Endothelial cell of umbilical vein (primary cell): ENCODE measurements at regions of chr2 and their contacts with region 1.

Region 1: GRCh38 chr2:237581751-237582746 is 8.5 kb downstream of the RAB17 start:
- DNase-seq: peak; percentile 79
- H3K4me3 ChIP-seq: no peak overlapping the region
- H3K27ac ChIP-seq: no peak overlapping the region
- H3K4me1 ChIP-seq: no peaks in the 10 kb centered on the region
- H3K27me3 ChIP-seq: peaks cover 2% of the 10 kb centered on the region in 2 experiments
- CTCF ChIP-seq: peak; percentile 55 to 61
- POLR2A ChIP-seq: no peak

Region 2: DNA sequence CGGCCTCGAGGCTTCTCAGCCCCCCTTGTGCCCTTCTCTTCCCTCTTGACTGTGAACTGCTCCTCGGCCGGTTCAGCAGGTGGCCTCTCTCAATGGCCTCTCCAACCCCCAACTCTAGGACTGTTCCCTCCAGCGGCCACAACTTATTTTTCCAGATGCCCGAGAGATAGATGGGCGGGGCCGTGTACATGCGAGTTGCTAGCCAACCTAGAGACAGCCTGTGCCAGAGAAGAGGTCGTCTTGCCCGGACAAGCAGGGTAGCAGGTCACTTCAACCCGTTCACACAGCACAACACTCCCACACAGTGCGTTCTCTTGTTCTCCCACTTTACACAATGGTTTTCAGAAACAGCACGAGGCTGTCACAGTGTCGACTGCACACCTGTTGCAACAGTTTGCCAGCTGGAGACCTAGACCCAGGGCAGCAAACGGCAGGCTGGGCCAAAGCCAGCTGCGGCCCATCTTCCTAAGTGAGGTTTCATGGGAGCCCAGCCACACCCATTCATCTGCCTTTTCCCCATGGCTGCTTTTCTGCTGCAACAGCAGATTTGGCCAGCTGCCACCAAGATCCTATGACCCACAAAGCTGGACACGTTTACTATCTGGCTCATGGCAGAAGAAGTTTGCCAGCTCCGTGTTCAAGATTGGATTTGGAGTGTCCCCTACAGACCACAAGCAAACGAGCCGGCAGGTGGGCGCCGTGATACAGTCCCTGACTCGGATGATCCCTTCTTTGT is 23.0 kb before region 1 on chr2:
- CTCF ChIA-PET with region 1: no interaction called
- POLR2A ChIA-PET with region 1: no interaction called
- dilution Hi-C with region 1: no loop called
- intact Hi-C with region 1: no loop called
- DNase-seq: no peak
- H3K4me3 ChIP-seq: no peak overlapping the region
- H3K27ac ChIP-seq: no peak overlapping the region
- H3K4me1 ChIP-seq: no peaks in the 10 kb centered on the region
- H3K27me3 ChIP-seq: peaks cover 4 to 7% of the 10 kb centered on the region in 2 experiments
- CTCF ChIP-seq: no peak
- POLR2A ChIP-seq: no peak

Region 3: GRCh38 chr2:237685408-237685807 is 103.4 kb after region 1 on chr2:
- CTCF ChIA-PET with region 1: interaction called, 18 read pairs
- POLR2A ChIA-PET with region 1: no interaction called
- dilution Hi-C with region 1: no loop called
- intact Hi-C with region 1: no loop called
- DNase-seq: no peak
- H3K4me3 ChIP-seq: no peak overlapping the region
- H3K27ac ChIP-seq: no peak overlapping the region
- H3K4me1 ChIP-seq: peaks cover 27% of the 10 kb centered on the region
- H3K27me3 ChIP-seq: no peaks in the 10 kb centered on the region
- CTCF ChIP-seq: peak; percentile 20 to 27
- POLR2A ChIP-seq: no peak

Region 4: DNA sequence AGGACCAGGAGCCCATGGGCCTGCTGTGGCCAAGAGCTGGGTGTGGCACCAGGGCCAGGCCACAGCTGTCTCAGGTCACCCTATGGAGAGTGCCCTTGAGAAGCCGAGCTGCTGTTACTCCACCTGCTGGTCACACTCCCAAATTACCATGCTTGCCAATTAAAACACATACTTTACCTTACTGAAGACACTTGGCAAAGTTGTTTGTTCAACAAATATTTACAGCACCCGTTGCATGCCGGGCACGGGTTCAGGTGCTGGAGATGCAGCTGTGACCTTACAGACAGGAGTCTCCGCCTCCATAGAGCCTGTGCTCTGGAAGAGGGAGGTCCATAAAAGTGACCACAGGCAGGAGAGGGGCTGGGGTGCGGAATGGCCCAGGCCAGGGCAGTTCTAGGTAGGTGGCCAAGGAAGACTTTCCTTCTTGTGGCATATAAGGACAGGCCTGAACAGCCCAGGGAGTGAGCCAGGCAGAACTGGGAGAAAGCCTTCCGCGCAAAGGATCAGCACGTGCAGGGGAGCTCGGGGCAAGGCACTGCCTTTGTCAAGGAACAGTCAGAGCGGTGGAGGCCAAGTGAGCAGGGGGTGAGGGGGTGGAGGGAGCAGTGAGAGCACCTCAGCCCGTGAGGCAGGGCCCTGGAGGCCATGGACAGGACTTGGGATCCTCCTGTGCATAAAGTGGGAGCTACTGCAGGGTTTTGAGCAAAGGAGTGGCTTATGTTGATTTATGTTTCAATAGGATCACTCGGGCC is 192.9 kb after region 1 on chr2:
- CTCF ChIA-PET with region 1: interaction called, 13 read pairs
- POLR2A ChIA-PET with region 1: no interaction called
- dilution Hi-C with region 1: no loop called
- intact Hi-C with region 1: loop called (anchors 1 kb)
- DNase-seq: peak; percentile 69
- H3K4me3 ChIP-seq: no peak overlapping the region
- H3K27ac ChIP-seq: no peak overlapping the region
- H3K4me1 ChIP-seq: no peaks in the 10 kb centered on the region
- H3K27me3 ChIP-seq: no peaks in the 10 kb centered on the region
- CTCF ChIP-seq: peak; percentile 76 to 77
- POLR2A ChIP-seq: no peak